ENCODE measurements at regions of chr16 and their contacts with region 1.

Region 1: DNA sequence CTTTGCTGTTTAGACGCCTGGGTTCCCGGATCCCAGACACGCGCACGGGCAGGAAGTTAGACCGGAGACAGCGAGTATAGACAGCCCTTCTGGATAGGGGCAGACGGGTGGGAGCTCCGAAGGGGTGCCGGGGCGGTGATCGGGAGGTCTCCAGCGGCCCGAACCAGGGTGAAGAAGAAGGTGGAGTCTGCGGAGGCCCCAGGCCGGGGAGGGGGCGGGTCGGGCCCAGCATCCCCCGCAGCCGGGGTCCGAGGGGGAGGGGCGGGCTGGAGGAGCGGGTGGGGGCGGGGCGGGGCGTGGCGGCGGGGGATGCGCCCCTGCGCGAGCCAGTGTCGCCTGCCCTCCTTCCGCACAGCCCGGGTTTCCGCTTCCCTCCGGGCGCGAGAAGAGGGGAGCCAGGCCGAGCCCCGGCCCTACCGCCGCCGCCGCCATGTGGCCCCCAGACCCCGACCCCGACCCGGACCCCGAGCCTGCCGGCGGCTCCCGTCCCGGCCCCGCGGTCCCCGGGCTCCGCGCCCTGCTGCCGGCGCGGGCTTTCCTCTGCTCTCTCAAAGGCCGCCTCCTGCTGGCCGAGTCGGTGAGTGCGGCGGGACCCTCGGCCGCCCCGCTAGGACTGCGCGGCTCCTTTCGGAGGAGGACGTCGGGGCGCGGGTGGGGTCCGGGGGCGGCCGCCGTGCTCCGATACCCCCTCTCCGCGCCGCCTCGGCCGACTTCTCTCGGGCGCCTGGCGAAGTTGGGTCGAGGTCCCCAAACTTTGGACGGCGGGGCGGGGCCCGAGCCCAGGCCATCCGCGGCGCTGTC is at the start of gene CMTM3:
- DNase-seq: peak; percentile 89
- ATAC-seq: peak; percentile 48
- H3K4me3 Mint-ChIP-seq: peak within 1 kb of the TSS; percentile 90
- H3K27ac Mint-ChIP-seq: peak within 1 kb of the TSS; percentile 98
- H3K4me1 Mint-ChIP-seq: peaks cover 46% of the 10 kb centered on the region
- H3K27me3 Mint-ChIP-seq: no peaks in the 10 kb centered on the region
- total RNA-seq, gene CMTM3: 107 to 108 TPM

Region 2: GRCh38 chr16:66406534-66407221 is 197.9 kb before region 1 on chr16:
- POLR2A ChIA-PET with region 1: interaction called, 14 read pairs
- DNase-seq: peak; percentile 89
- ATAC-seq: peak; percentile 87
- H3K4me3 Mint-ChIP-seq: peak overlapping the region; percentile 88
- H3K27ac Mint-ChIP-seq: peak overlapping the region; percentile 73
- H3K4me1 Mint-ChIP-seq: peaks cover 18% of the 10 kb centered on the region
- H3K27me3 Mint-ChIP-seq: peaks cover 16% of the 10 kb centered on the region

Region 3: GRCh38 chr16:66521951-66522771 is 82.4 kb before region 1 on chr16:
- POLR2A ChIA-PET with region 1: interaction called, 29 read pairs
- DNase-seq: peak; percentile 87
- ATAC-seq: peak; percentile 74
- H3K4me3 Mint-ChIP-seq: peak overlapping the region; percentile 66
- H3K27ac Mint-ChIP-seq: peak overlapping the region; percentile 88
- H3K4me1 Mint-ChIP-seq: peaks cover 78% of the 10 kb centered on the region
- H3K27me3 Mint-ChIP-seq: no peaks in the 10 kb centered on the region

Region 4: GRCh38 chr16:66552286-66553177 is 52.0 kb before region 1 on chr16 and contains the start of gene CKLF:
- POLR2A ChIA-PET with region 1: interaction called, 38 read pairs
- DNase-seq: peak; percentile 97
- ATAC-seq: peak; percentile 80
- H3K4me3 Mint-ChIP-seq: peak within 1 kb of the TSS; percentile 96
- H3K27ac Mint-ChIP-seq: peak within 1 kb of the TSS; percentile 93
- H3K4me1 Mint-ChIP-seq: peaks cover 66% of the 10 kb centered on the region
- H3K27me3 Mint-ChIP-seq: no peaks in the 10 kb centered on the region
- total RNA-seq, gene CKLF: 124 to 130 TPM

Region 5: DNA sequence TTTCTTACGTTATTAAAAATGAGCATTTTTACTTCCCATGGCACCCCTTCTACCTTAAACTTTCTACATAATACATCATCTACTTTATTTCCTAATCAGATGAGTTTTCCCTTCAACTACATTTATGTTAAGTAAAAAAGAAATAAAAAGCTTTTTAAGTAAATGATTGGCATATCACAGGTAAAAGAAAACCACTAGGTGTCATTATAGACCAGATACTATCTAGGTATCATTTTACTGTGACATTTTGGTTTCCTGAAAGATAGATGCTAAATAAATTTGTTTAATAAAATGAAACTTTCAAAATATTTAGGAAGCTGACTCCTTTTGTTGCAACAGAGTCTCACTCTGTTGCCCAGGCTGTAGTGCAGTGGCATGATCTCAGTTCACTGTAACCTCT is 42.2 kb before region 1 on chr16:
- POLR2A ChIA-PET with region 1: interaction called, 15 read pairs
- DNase-seq: no peak
- ATAC-seq: no peak
- H3K4me3 Mint-ChIP-seq: no peak overlapping the region
- H3K27ac Mint-ChIP-seq: no peak overlapping the region
- H3K4me1 Mint-ChIP-seq: peaks cover 44% of the 10 kb centered on the region
- H3K27me3 Mint-ChIP-seq: no peaks in the 10 kb centered on the region

Region 6: DNA sequence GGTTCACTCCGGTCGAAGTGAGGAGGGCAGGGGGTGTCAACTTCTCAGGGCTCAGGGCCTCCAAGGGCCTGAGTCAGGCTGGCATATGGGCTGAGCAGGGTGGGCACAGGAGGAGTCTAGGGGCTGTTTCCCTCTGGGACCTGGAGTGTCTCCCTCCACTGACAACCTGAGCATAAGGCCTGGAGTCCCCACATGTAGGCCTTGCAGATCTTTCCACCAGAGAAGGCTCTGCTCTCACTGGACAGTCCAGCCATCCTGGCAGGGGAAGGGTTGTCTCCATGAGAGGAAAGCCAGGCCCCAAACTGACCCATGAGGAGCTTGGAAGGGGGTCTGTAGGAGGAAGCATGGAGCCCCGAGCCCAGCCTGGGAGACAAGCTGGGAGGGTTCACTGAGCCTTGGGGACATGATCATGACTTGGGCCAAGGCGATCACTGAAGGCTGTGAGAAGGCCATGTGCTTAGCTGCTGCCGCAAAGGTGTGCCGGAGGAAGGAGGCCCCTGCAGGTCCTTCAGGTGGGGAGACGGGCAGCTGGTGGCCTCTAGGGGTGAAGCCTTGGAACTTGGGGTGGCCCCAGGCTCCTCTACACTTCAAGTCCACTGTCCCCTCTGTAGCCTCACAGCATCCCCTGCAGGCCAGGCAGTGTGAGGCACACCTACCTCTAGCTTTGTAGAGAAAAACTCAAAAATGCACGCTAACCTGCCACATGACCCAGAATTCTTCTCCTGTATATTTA is 15.4 kb before region 1 on chr16:
- POLR2A ChIA-PET with region 1: interaction called, 29 read pairs
- DNase-seq: peak; percentile 74
- ATAC-seq: peak; percentile 98
- H3K4me3 Mint-ChIP-seq: peak overlapping the region; percentile 82
- H3K27ac Mint-ChIP-seq: peak overlapping the region; percentile 77
- H3K4me1 Mint-ChIP-seq: peaks cover 46% of the 10 kb centered on the region
- H3K27me3 Mint-ChIP-seq: no peaks in the 10 kb centered on the region

Measured in activated naive CD8-positive, alpha-beta T cell treated with anti-CD3 and anti-CD28 coated beads, Interleukin-2, amount 10 ng/mL, durations not matched to agents 7 days and 5 days (primary cell).